HAP-1 (cell line): ENCODE measurements at regions of chr4 and their contacts with region 1.

Region 1: DNA sequence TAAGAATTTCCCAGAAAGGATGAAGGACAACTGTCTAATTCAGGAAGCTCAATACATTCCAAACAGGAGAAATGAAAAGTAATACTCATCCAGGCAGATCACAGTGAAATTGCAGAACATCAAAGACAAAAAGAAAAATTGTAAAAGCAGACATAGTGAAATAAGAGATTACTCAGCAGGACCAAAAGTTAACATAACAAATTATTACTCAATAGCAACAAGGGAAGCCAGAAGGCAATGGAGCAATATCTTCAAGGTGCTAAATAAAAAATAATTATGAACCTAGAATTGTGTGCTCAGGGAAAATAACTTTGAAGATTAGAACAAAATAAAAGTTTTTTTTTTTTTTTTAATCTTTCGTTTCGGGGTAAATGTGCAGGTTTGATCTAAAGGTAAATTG is 30.5 kb upstream of the ENPP6 start:
- DNase-seq: no peak
- H3K4me3 ChIP-seq: no peak overlapping the region
- H3K4me1 ChIP-seq: no peaks in the 10 kb centered on the region
- H3K27me3 ChIP-seq: no peaks in the 10 kb centered on the region

Region 2: GRCh38 chr4:183838987-183839712 is 409.1 kb before region 1 on chr4:
- in situ Hi-C with region 1: loop called (anchors 10 kb)
- DNase-seq: no peak
- H3K4me3 ChIP-seq: no peak overlapping the region
- H3K4me1 ChIP-seq: no peaks in the 10 kb centered on the region
- H3K27me3 ChIP-seq: no peaks in the 10 kb centered on the region